CD4-positive, alpha-beta memory T cell (primary cell): ENCODE measurements at regions of chrX and their contacts with region 1.

Region 1: DNA sequence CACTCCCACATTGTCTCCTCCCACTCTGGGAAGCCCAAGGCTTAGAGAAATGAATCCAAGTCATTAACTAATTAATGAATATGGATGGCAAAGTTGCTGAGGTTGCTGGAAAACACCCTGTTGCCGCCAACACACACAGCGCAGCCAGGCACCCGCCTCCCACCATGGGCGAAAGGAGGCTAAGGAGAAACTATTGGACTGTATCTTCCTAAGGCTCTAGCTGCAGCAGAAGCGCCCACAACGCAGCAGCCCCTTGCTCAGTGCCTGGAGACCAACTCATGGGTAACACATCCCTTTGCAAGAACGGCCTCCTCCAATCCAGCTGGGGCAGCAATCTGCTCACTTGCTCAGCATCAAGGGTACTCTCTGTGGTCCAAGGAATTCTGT is 34.2 kb downstream of the TSC22D3 start:
- DNase-seq: peak in 1 of 5 donors; percentile 43
- H3K4me3 ChIP-seq: peak overlapping the region in 1 of 2 donors; percentile 41
- H3K4me3 Mint-ChIP-seq: peak overlapping the region; percentile 64 to 95 (median 85)
- H3K27ac ChIP-seq: peak overlapping the region; percentile 52
- H3K27ac Mint-ChIP-seq: peak overlapping the region; percentile 95 to 100 (median 98)
- H3K4me1 ChIP-seq: peaks cover 48% of the 10 kb centered on the region
- H3K4me1 Mint-ChIP-seq: peaks cover 23 to 49% (median 33%) of the 10 kb centered on the region in 4 donors
- H3K27me3 ChIP-seq: no peaks in the 10 kb centered on the region
- H3K27me3 Mint-ChIP-seq: peaks cover 0 to 4% of the 10 kb centered on the region in 2 donors

Region 2: GRCh38 chrX:107213477-107213876 is 527.9 kb before region 1 on chrX:
- CTCF ChIA-PET with region 1: no interaction called
- POLR2A ChIA-PET with region 1: no interaction called
- intact Hi-C with region 1: no loop called
- DNase-seq: no peak
- H3K4me3 ChIP-seq: no peak overlapping the region
- H3K4me3 Mint-ChIP-seq: no peak overlapping the region
- H3K27ac ChIP-seq: no peak overlapping the region
- H3K27ac Mint-ChIP-seq: no peak overlapping the region
- H3K4me1 ChIP-seq: no peaks in the 10 kb centered on the region
- H3K4me1 Mint-ChIP-seq: no peaks in the 10 kb centered on the region
- H3K27me3 ChIP-seq: no peaks in the 10 kb centered on the region
- H3K27me3 Mint-ChIP-seq: no peaks in the 10 kb centered on the region

Region 3: GRCh38 chrX:107710617-107711391 is 30.6 kb before region 1 on chrX:
- CTCF ChIA-PET with region 1: interaction called, 20 read pairs
- POLR2A ChIA-PET with region 1: interaction called, 210 read pairs
- intact Hi-C with region 1: loop called (anchors 1 kb)
- DNase-seq: peak; percentile 89 to 93 (median 91)
- H3K4me3 ChIP-seq: peak overlapping the region; percentile 29 to 46
- H3K4me3 Mint-ChIP-seq: peak overlapping the region; percentile 75 to 96 (median 86)
- H3K27ac ChIP-seq: peak overlapping the region; percentile 95
- H3K27ac Mint-ChIP-seq: peak overlapping the region; percentile 99 to 100 (median 100)
- H3K4me1 ChIP-seq: peaks cover 65% of the 10 kb centered on the region
- H3K4me1 Mint-ChIP-seq: peaks cover 36 to 82% (median 60%) of the 10 kb centered on the region in 4 donors
- H3K27me3 ChIP-seq: no peaks in the 10 kb centered on the region
- H3K27me3 Mint-ChIP-seq: no peaks in the 10 kb centered on the region

Region 4: GRCh38 chrX:107753187-107753586 is 11.8 kb after region 1 on chrX:
- CTCF ChIA-PET with region 1: no interaction called
- POLR2A ChIA-PET with region 1: interaction called, 16 read pairs
- intact Hi-C with region 1: no loop called
- DNase-seq: no peak
- H3K4me3 ChIP-seq: no peak overlapping the region
- H3K4me3 Mint-ChIP-seq: no peak overlapping the region
- H3K27ac ChIP-seq: no peak overlapping the region
- H3K27ac Mint-ChIP-seq: peak overlapping the region in 2 of 7 donors; percentile 15 to 24
- H3K4me1 ChIP-seq: no peaks in the 10 kb centered on the region
- H3K4me1 Mint-ChIP-seq: peaks cover 5 to 17% (median 9%) of the 10 kb centered on the region in 4 donors
- H3K27me3 ChIP-seq: no peaks in the 10 kb centered on the region
- H3K27me3 Mint-ChIP-seq: no peaks in the 10 kb centered on the region

Region 5: DNA sequence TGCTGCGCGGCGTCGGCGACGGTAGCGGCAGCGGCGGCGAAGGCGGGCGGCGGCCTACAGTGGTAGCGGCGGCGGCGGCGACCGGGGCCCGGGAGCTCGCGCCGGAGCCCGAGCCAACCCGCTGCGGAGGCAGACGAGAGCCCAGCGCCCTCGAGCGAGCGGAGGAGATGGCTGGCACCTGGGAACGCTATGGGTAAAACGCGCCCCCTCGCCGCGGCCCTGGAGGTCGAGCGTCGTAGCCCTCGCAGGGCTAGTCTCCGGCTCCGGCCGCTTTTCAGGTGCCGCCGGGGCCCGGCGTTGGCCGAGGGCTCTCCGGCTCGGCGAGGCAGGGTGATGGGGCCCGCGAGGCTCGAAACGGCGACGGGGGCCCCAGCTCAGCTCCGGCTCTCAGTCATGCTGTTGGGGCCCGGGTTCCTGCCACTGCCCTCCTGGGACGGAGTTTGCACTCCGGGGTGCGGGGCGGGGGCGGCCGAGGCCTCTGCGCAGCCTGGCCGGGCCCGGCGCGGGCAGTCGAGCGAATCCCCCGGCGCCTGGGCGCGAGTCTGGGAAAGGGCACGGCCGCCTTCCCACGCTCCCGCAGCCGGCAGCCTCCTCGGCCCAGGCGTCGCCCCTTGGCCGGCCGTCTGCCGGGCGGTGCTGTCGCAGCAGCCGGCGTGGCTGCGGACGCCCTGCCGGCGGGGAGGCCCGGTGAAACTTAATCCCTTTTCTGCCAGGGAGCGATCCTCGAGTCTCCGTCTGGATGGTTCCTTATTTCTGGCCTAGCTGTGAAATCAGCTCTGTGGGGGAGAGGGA is 85.0 kb after region 1 on chrX:
- CTCF ChIA-PET with region 1: no interaction called
- POLR2A ChIA-PET with region 1: interaction called, 13 read pairs
- intact Hi-C with region 1: no loop called
- DNase-seq: peak in 4 of 5 donors; percentile 20 to 48 (median 43)
- H3K4me3 ChIP-seq: peak overlapping the region in 1 of 2 donors; percentile 49
- H3K4me3 Mint-ChIP-seq: peak overlapping the region; percentile 75 to 95 (median 90)
- H3K27ac ChIP-seq: peak overlapping the region; percentile 52
- H3K27ac Mint-ChIP-seq: peak overlapping the region; percentile 68 to 93 (median 84)
- H3K4me1 ChIP-seq: peaks cover 19% of the 10 kb centered on the region
- H3K4me1 Mint-ChIP-seq: peaks cover 26 to 59% (median 35%) of the 10 kb centered on the region in 4 donors
- H3K27me3 ChIP-seq: no peaks in the 10 kb centered on the region
- H3K27me3 Mint-ChIP-seq: peaks cover 0 to 1% of the 10 kb centered on the region in 2 donors